ENCODE measurements at regions of chr19 and their contacts with region 1.

Region 1: GRCh38 chr19:31349160-31349881 is at the start of gene TSHZ3:
- DNase-seq: peak; percentile 87
- ATAC-seq: peak; percentile 69
- H3K4me3 ChIP-seq: peak within 1 kb of the TSS; percentile 93
- H3K27ac ChIP-seq: peak within 1 kb of the TSS; percentile 93
- H3K4me1 ChIP-seq: peaks cover 18% of the 10 kb centered on the region
- H3K27me3 ChIP-seq: no peaks in the 10 kb centered on the region
- CTCF ChIP-seq: no peak
- POLR2A ChIP-seq: 0 out of 2 replicates have a peak, but pooled peaks have one; percentile 21
- RAD21 ChIP-seq: no peak
- total RNA-seq, gene TSHZ3: 7.8 and 8.1 TPM in 2 replicates

Region 2: GRCh38 chr19:31054430-31054829 is 294.9 kb before region 1 on chr19:
- CTCF ChIA-PET with region 1: interaction called, 6 read pairs
- POLR2A ChIA-PET with region 1: no interaction called
- dilution Hi-C with region 1: no loop called
- in situ Hi-C with region 1: no loop called
- intact Hi-C with region 1: loop called (anchors 2 kb)
- DNase-seq: peak; percentile 83
- ATAC-seq: peak; percentile 98
- H3K4me3 ChIP-seq: no peak overlapping the region
- H3K27ac ChIP-seq: no peak overlapping the region
- H3K4me1 ChIP-seq: no peaks in the 10 kb centered on the region
- H3K27me3 ChIP-seq: peaks cover 5% of the 10 kb centered on the region
- CTCF ChIP-seq: peak; percentile 95
- POLR2A ChIP-seq: no peak
- RAD21 ChIP-seq: peak; percentile 97

Region 3: GRCh38 chr19:31127134-31127967 is 222.0 kb before region 1 on chr19:
- CTCF ChIA-PET with region 1: no interaction called
- POLR2A ChIA-PET with region 1: interaction called, 6 read pairs
- dilution Hi-C with region 1: no loop called
- in situ Hi-C with region 1: no loop called
- intact Hi-C with region 1: loop called (anchors 2 kb)
- DNase-seq: peak; percentile 99
- ATAC-seq: peak; percentile 96
- H3K4me3 ChIP-seq: no peak overlapping the region
- H3K27ac ChIP-seq: peak overlapping the region; percentile 93
- H3K4me1 ChIP-seq: peaks cover 12% of the 10 kb centered on the region
- H3K27me3 ChIP-seq: no peaks in the 10 kb centered on the region
- CTCF ChIP-seq: no peak
- POLR2A ChIP-seq: peak; percentile 51; the same call in 1 of the 2 replicates
- RAD21 ChIP-seq: peak; percentile 25

Region 4: DNA sequence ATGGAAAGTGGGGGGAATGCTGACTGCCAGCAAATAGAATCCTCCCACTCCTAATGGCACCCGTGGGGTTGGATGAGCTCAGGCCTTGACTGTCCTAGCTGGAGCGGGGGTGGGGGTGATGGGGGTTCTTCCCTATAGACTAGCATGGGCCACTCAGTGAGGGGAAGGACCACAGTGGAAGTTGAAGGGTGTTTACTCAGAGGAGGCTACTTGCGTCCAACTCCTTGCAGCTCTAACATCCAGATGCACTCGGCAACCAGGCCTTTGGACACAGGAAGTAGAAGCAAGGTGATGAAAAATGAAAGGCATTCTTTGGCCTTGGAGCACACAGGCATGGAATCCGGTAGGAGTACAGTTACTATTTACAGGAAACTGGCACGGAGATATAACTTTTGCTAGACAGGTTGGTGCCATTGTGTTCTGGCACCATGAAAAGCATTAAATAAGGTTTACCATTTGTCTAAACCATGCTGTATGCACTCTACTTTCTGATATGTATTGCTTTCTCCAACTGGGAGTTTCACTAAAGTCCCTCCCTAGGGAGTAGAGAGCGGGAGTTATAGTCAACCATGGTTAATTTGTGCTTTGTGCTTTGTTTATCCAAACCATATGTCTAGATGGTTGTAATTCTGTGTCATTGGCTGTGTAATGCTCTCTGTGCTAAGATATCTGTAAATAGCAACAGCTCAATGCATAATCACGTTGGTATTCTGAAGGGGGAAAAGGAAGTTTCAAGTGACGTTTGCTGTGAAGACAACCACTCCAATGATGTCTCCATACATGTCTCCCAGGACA is 125.4 kb before region 1 on chr19:
- CTCF ChIA-PET with region 1: no interaction called
- POLR2A ChIA-PET with region 1: no interaction called
- dilution Hi-C with region 1: no loop called
- in situ Hi-C with region 1: no loop called
- intact Hi-C with region 1: no loop called
- DNase-seq: peak; percentile 98
- ATAC-seq: peak; percentile 93
- H3K4me3 ChIP-seq: no peak overlapping the region; the same call in 1 of the 2 replicates
- H3K27ac ChIP-seq: peak overlapping the region; percentile 89
- H3K4me1 ChIP-seq: peaks cover 19% of the 10 kb centered on the region
- H3K27me3 ChIP-seq: no peaks in the 10 kb centered on the region
- CTCF ChIP-seq: no peak
- POLR2A ChIP-seq: no peak
- RAD21 ChIP-seq: no peak; the same call in 1 of the 2 replicates

Region 5: GRCh38 chr19:31338069-31338776 is 11.1 kb before region 1 on chr19:
- CTCF ChIA-PET with region 1: interaction called, 5 read pairs
- POLR2A ChIA-PET with region 1: interaction called, 5 read pairs
- dilution Hi-C with region 1: no loop called
- in situ Hi-C with region 1: no loop called
- intact Hi-C with region 1: loop called (anchors 1 kb)
- DNase-seq: peak; percentile 85
- ATAC-seq: peak; percentile 79
- H3K4me3 ChIP-seq: no peak overlapping the region
- H3K27ac ChIP-seq: peak overlapping the region; percentile 97
- H3K4me1 ChIP-seq: peaks cover 53% of the 10 kb centered on the region
- H3K27me3 ChIP-seq: no peaks in the 10 kb centered on the region
- CTCF ChIP-seq: peak; percentile 69
- POLR2A ChIP-seq: no peak
- RAD21 ChIP-seq: peak; percentile 62

Region 6: DNA sequence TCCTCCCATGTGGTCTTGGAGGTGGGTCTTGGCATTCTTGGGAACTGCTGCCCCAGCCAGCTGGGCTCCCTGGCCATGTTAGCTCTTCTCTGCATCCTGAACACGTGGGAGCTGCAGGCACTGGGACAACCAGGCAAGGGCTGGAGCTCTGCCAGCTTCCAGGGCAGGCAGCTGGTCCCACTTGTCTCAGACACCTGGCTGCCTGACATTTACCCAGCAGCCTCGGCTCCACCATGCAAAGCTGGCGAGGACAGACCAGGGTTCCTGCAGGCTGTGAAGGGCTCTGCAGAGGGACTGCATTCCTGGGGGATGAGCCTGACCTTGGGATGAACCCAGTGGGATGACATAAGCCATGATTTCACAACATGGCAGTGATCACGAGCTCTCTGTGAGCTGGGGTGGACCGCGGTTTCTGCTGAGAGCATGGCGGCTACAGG is 98.9 kb after region 1 on chr19:
- CTCF ChIA-PET with region 1: no interaction called
- POLR2A ChIA-PET with region 1: no interaction called
- dilution Hi-C with region 1: no loop called
- in situ Hi-C with region 1: no loop called
- intact Hi-C with region 1: loop called (anchors 5 kb)
- DNase-seq: peak; percentile 89
- ATAC-seq: peak; percentile 96
- H3K4me3 ChIP-seq: no peak overlapping the region
- H3K27ac ChIP-seq: peak overlapping the region; percentile 34; the same call in 1 of the 2 replicates
- H3K4me1 ChIP-seq: peaks cover 4% of the 10 kb centered on the region; the same call in 1 of the 2 replicates
- H3K27me3 ChIP-seq: peaks cover 2% of the 10 kb centered on the region
- CTCF ChIP-seq: no peak
- POLR2A ChIP-seq: no peak
- RAD21 ChIP-seq: no peak

Region 7: DNA sequence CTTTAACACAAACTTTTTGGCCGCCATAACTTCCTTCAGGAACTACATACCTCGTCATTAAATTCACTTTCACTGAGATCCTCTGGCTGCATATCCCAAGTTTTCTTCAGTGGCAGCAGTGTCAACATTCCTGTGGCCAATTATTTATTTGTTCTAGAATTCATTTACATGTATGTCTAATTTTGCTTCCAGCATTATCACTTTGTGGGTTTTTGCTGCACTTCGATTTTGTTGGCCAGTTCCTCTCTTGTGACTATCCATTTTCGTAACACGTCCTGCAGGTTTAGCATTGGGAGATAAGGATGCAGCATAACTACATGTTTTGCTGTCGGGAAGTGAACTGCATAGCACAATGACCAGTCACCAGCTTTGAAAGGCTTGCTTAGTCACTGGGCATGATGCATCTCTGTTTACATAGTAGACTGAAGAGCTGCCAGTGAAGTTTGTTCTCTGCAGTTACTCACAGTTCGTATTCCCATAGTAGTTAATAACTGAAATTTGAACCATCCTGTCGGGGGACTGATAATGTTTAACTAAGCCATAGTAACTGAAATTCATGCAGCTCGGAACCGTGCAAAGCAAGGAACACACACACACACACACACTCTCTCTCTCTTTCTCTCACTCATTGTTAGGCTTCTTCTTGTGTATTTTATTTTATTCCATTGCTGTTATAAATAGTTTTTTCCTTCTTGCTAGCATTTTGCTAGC is 1024.4 kb after region 1 on chr19:
- CTCF ChIA-PET with region 1: no interaction called
- POLR2A ChIA-PET with region 1: no interaction called
- dilution Hi-C with region 1: no loop called
- in situ Hi-C with region 1: loop called (anchors 25 kb)
- intact Hi-C with region 1: no loop called
- DNase-seq: peak; percentile 100
- ATAC-seq: peak; percentile 94
- H3K4me3 ChIP-seq: peak overlapping the region; percentile 8; the same call in 1 of the 2 replicates
- H3K27ac ChIP-seq: peak overlapping the region; percentile 95
- H3K4me1 ChIP-seq: peaks cover 14% of the 10 kb centered on the region
- H3K27me3 ChIP-seq: no peaks in the 10 kb centered on the region
- CTCF ChIP-seq: no peak
- POLR2A ChIP-seq: no peak
- RAD21 ChIP-seq: no peak